CD4-positive, alpha-beta memory T cell (primary cell): ENCODE measurements at regions of chr11 and their contacts with region 1.

Region 1: GRCh38 chr11:104918113-104918824 is 20.0 kb upstream of the CASP12 start:
- DNase-seq: peak in 3 of 5 donors; percentile 33 to 46 (median 40)
- H3K4me3 ChIP-seq: peak overlapping the region; percentile 56 to 75
- H3K4me3 Mint-ChIP-seq: peak overlapping the region; percentile 79 to 99 (median 96)
- H3K27ac ChIP-seq: peak overlapping the region; percentile 56
- H3K27ac Mint-ChIP-seq: peak overlapping the region; percentile 79 to 99 (median 97)
- H3K4me1 ChIP-seq: peaks cover 54% of the 10 kb centered on the region
- H3K4me1 Mint-ChIP-seq: peaks cover 42 to 67% (median 50%) of the 10 kb centered on the region in 4 donors
- H3K27me3 ChIP-seq: no peaks in the 10 kb centered on the region
- H3K27me3 Mint-ChIP-seq: no peaks in the 10 kb centered on the region

Region 2: GRCh38 chr11:103806130-103806900 is 1112.0 kb before region 1 on chr11:
- CTCF ChIA-PET with region 1: no interaction called
- POLR2A ChIA-PET with region 1: no interaction called
- intact Hi-C with region 1: no loop called
- DNase-seq: no peak
- H3K4me3 ChIP-seq: no peak overlapping the region
- H3K4me3 Mint-ChIP-seq: no peak overlapping the region
- H3K27ac ChIP-seq: no peak overlapping the region
- H3K27ac Mint-ChIP-seq: no peak overlapping the region
- H3K4me1 ChIP-seq: no peaks in the 10 kb centered on the region
- H3K4me1 Mint-ChIP-seq: no peaks in the 10 kb centered on the region
- H3K27me3 ChIP-seq: no peaks in the 10 kb centered on the region
- H3K27me3 Mint-ChIP-seq: peaks cover 0 to 2% of the 10 kb centered on the region in 2 donors

Region 3: DNA sequence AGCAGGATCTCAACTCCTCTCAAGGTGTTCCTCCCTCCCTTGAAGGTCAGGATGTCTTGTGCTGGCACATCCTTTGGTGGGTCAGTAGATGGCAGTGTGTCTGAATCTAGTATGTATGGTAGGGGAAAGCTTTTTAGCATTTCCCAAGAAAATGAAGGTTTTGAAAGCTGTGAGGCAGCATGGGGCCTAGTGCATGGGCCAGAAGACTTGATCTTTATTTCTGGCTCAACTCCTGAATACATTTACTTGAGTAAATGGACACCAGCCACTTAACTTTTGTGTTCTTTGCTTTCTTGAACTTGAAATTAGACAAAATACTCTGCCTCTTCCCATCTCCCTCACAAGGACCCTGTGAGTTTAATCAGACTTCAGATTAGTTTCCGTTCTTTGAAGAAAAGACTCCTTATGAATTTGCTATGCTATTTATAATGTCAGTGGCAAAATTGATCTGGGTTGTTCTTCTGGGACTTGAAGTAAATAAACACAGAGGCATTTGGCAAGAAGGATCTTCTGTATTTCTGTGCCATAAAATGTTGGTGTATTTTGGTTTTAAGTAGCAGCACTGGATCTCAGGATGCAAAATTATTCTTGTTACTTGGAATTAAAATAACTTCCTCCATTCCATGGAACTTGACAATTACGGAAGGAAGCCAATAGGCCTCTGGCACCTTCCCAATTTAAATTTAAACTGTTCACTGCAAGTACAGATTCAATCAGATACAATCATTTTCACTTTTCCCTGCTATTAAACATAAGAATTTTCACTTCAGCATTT is 308.8 kb before region 1 on chr11:
- CTCF ChIA-PET with region 1: interaction called, 4 read pairs
- POLR2A ChIA-PET with region 1: interaction called, 3 read pairs
- intact Hi-C with region 1: loop called (anchors 2 kb)
- DNase-seq: peak; percentile 37 to 62 (median 56)
- H3K4me3 ChIP-seq: no peak overlapping the region
- H3K4me3 Mint-ChIP-seq: peak overlapping the region in 2 of 8 donors; percentile 15 to 18
- H3K27ac ChIP-seq: no peak overlapping the region
- H3K27ac Mint-ChIP-seq: peak overlapping the region in 2 of 7 donors; percentile 37 to 54
- H3K4me1 ChIP-seq: peaks cover 12% of the 10 kb centered on the region
- H3K4me1 Mint-ChIP-seq: peaks cover 10 to 12% (median 11%) of the 10 kb centered on the region in 4 donors
- H3K27me3 ChIP-seq: no peaks in the 10 kb centered on the region
- H3K27me3 Mint-ChIP-seq: no peaks in the 10 kb centered on the region

Region 4: GRCh38 chr11:104852811-104853210 is 65.5 kb before region 1 on chr11:
- CTCF ChIA-PET with region 1: no interaction called
- POLR2A ChIA-PET with region 1: no interaction called
- intact Hi-C with region 1: no loop called
- DNase-seq: no peak
- H3K4me3 ChIP-seq: no peak overlapping the region
- H3K4me3 Mint-ChIP-seq: no peak overlapping the region
- H3K27ac ChIP-seq: no peak overlapping the region
- H3K27ac Mint-ChIP-seq: peak overlapping the region in 1 of 7 donors; percentile 47
- H3K4me1 ChIP-seq: no peaks in the 10 kb centered on the region
- H3K4me1 Mint-ChIP-seq: peaks cover 2 to 5% (median 3%) of the 10 kb centered on the region in 4 donors
- H3K27me3 ChIP-seq: no peaks in the 10 kb centered on the region
- H3K27me3 Mint-ChIP-seq: no peaks in the 10 kb centered on the region

Region 5: GRCh38 chr11:104876861-104877431 is 41.3 kb before region 1 on chr11:
- CTCF ChIA-PET with region 1: no interaction called
- POLR2A ChIA-PET with region 1: interaction called, 3 read pairs
- intact Hi-C with region 1: loop called (anchors 5 kb)
- DNase-seq: peak in 3 of 5 donors; percentile 16 to 31 (median 17)
- H3K4me3 ChIP-seq: peak overlapping the region; percentile 9 to 31
- H3K4me3 Mint-ChIP-seq: peak overlapping the region; percentile 51 to 86 (median 78)
- H3K27ac ChIP-seq: peak overlapping the region; percentile 36
- H3K27ac Mint-ChIP-seq: peak overlapping the region; percentile 69 to 92 (median 88)
- H3K4me1 ChIP-seq: peaks cover 34% of the 10 kb centered on the region
- H3K4me1 Mint-ChIP-seq: peaks cover 37 to 45% (median 41%) of the 10 kb centered on the region in 4 donors
- H3K27me3 ChIP-seq: no peaks in the 10 kb centered on the region
- H3K27me3 Mint-ChIP-seq: no peaks in the 10 kb centered on the region

Region 6: GRCh38 chr11:104897891-104898684 is 20.2 kb before region 1 on chr11 and contains the start of gene CASP12:
- CTCF ChIA-PET with region 1: interaction called, 3 read pairs
- POLR2A ChIA-PET with region 1: interaction called, 21 read pairs
- intact Hi-C with region 1: loop called (anchors 1 kb)
- DNase-seq: peak in 3 of 5 donors; percentile 18 to 37 (median 30)
- H3K4me3 ChIP-seq: peak within 1 kb of the TSS; percentile 5 to 8
- H3K4me3 Mint-ChIP-seq: peak within 1 kb of the TSS; percentile 75 to 89 (median 84)
- H3K27ac ChIP-seq: peak within 1 kb of the TSS; percentile 24
- H3K27ac Mint-ChIP-seq: peak within 1 kb of the TSS; percentile 67 to 96 (median 91)
- H3K4me1 ChIP-seq: peaks cover 34% of the 10 kb centered on the region
- H3K4me1 Mint-ChIP-seq: peaks cover 27 to 50% (median 39%) of the 10 kb centered on the region in 4 donors
- H3K27me3 ChIP-seq: no peaks in the 10 kb centered on the region
- H3K27me3 Mint-ChIP-seq: no peaks in the 10 kb centered on the region
- total RNA-seq, gene CASP12: not detected

Region 7: DNA sequence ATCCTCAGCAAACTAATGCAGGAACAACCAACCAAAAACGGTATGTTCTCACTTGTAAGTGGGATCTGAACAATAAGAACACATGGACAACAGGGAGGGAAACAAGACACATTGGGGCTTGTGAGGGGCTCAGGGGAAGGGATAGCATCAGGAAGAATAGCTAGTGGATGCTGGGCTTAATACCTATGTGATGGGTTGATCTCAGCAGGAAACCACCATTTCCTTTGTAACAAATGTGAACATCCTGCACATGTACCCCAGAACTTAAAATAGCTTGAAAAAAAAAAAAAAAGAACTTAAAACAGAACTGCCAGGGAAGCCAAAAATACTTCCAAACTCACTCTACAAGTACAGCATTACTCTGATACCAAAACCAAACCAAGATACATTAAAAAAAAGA is 16.3 kb after region 1 on chr11:
- CTCF ChIA-PET with region 1: interaction called, 4 read pairs
- POLR2A ChIA-PET with region 1: interaction called, 9 read pairs
- intact Hi-C with region 1: loop called (anchors 1 kb)
- DNase-seq: peak in 4 of 5 donors; percentile 19 to 28 (median 24)
- H3K4me3 ChIP-seq: no peak overlapping the region
- H3K4me3 Mint-ChIP-seq: peak overlapping the region; percentile 13 to 87 (median 80)
- H3K27ac ChIP-seq: no peak overlapping the region
- H3K27ac Mint-ChIP-seq: peak overlapping the region in 4 of 7 donors; percentile 28 to 89 (median 60)
- H3K4me1 ChIP-seq: peaks cover 25% of the 10 kb centered on the region
- H3K4me1 Mint-ChIP-seq: peaks cover 29 to 49% (median 34%) of the 10 kb centered on the region in 4 donors
- H3K27me3 ChIP-seq: no peaks in the 10 kb centered on the region
- H3K27me3 Mint-ChIP-seq: no peaks in the 10 kb centered on the region

Region 8: GRCh38 chr11:104946907-104947306 is 28.6 kb after region 1 on chr11:
- CTCF ChIA-PET with region 1: interaction called, 12 read pairs
- POLR2A ChIA-PET with region 1: no interaction called
- intact Hi-C with region 1: loop called (anchors 1 kb)
- DNase-seq: peak in 4 of 5 donors; percentile 48 to 60 (median 50)
- H3K4me3 ChIP-seq: no peak overlapping the region
- H3K4me3 Mint-ChIP-seq: no peak overlapping the region
- H3K27ac ChIP-seq: no peak overlapping the region
- H3K27ac Mint-ChIP-seq: peak overlapping the region in 4 of 7 donors; percentile 27 to 89 (median 79)
- H3K4me1 ChIP-seq: peaks cover 5% of the 10 kb centered on the region
- H3K4me1 Mint-ChIP-seq: peaks cover 11 to 28% (median 16%) of the 10 kb centered on the region in 4 donors
- H3K27me3 ChIP-seq: no peaks in the 10 kb centered on the region
- H3K27me3 Mint-ChIP-seq: no peaks in the 10 kb centered on the region

Region 9: GRCh38 chr11:104968355-104968855 is 50.1 kb after region 1 on chr11 and contains the start of gene CASP4:
- CTCF ChIA-PET with region 1: no interaction called
- POLR2A ChIA-PET with region 1: interaction called, 18 read pairs
- intact Hi-C with region 1: loop called (anchors 2 kb)
- DNase-seq: peak in 4 of 5 donors; percentile 46 to 57 (median 55)
- H3K4me3 ChIP-seq: peak within 1 kb of the TSS; percentile 78 to 81
- H3K4me3 Mint-ChIP-seq: peak within 1 kb of the TSS; percentile 92 to 98 (median 95)
- H3K27ac ChIP-seq: peak within 1 kb of the TSS; percentile 82
- H3K27ac Mint-ChIP-seq: peak within 1 kb of the TSS; percentile 90 to 99 (median 98)
- H3K4me1 ChIP-seq: peaks cover 42% of the 10 kb centered on the region
- H3K4me1 Mint-ChIP-seq: peaks cover 29 to 43% (median 36%) of the 10 kb centered on the region in 4 donors
- H3K27me3 ChIP-seq: no peaks in the 10 kb centered on the region
- H3K27me3 Mint-ChIP-seq: no peaks in the 10 kb centered on the region
- total RNA-seq, gene CASP4: 97.9 to 98.4 TPM

Region 10: GRCh38 chr11:104979849-104980248 is 61.6 kb after region 1 on chr11:
- CTCF ChIA-PET with region 1: no interaction called
- POLR2A ChIA-PET with region 1: no interaction called
- intact Hi-C with region 1: no loop called
- DNase-seq: no peak
- H3K4me3 ChIP-seq: no peak overlapping the region
- H3K4me3 Mint-ChIP-seq: no peak overlapping the region
- H3K27ac ChIP-seq: no peak overlapping the region
- H3K27ac Mint-ChIP-seq: no peak overlapping the region
- H3K4me1 ChIP-seq: no peaks in the 10 kb centered on the region
- H3K4me1 Mint-ChIP-seq: peaks cover 0 to 3% (median 0%) of the 10 kb centered on the region in 4 donors
- H3K27me3 ChIP-seq: no peaks in the 10 kb centered on the region
- H3K27me3 Mint-ChIP-seq: no peaks in the 10 kb centered on the region